HCT116 (cell line): ENCODE measurements at regions of chr10 and their contacts with region 1.

Region 1: DNA sequence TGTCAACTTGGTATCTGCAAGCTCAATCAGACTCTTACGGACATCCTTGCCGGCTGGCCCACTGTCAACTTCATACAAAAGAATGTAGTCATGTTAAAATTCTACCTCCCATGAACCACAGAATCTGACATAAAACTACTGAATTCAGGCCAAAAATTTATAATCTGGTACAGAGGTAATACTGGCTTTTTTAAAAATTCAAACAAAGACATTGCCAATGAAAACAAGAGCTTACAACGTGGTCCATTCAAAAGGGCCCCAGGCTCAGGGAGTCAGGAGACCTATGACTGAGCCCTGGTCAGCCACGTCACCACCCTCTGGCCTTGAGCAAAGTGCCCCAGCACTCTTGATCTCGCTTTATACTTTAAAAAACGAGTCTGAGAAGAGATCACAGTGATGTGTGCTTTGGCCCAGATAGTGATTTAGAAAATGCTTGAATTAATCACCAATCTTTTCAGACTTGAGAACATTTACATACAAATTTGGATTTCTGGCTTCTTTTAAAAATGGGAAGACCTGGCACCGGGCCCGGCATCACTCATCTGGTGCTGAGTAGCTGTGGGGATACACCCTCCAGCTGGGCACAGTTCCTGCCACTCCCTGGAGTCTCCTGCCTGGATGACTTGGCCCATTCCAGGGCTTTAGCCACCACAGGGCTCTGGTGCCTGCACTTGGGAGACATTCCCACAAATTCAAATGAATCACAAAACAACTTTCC is 94.1 kb downstream of the PIP4K2A start:
- DNase-seq: peak; percentile 91
- ATAC-seq: peak; percentile 80
- H3K4me3 ChIP-seq: peak overlapping the region in 1 of 2 experiments; percentile 16; a peak in 2 of 4 replicates
- H3K27ac ChIP-seq: peak overlapping the region; percentile 85
- H3K4me1 ChIP-seq: peaks cover 92 to 100% of the 10 kb centered on the region in 2 experiments
- H3K27me3 ChIP-seq: no peaks in the 10 kb centered on the region
- CTCF ChIP-seq: no peak
- POLR2A ChIP-seq: no peak
- RAD21 ChIP-seq: peak; percentile 13; the same call in 1 of the 2 replicates

Region 2: DNA sequence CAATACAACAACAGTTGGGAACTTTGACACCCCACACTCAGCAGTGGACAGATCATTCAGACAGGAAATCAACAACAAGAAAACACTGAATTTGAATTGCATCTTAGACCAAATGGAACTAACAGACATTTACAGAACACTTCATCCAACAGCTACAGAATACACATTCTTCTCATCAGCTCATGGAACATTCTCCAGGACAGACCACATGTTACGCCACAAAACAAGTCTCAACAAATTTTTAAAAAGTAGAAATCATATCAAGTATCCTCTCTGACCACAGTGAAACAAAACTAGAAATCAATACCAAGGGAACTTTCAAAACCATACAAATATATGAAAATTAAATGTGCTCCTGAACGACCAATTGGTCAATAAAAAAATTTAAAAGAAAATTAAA is 829.0 kb before region 1 on chr10:
- CTCF ChIA-PET with region 1: no interaction called
- POLR2A ChIA-PET with region 1: no interaction called
- RAD21 ChIA-PET with region 1: no interaction called
- intact Hi-C with region 1: no loop called
- DNase-seq: no peak
- ATAC-seq: no peak
- H3K4me3 ChIP-seq: no peak overlapping the region
- H3K27ac ChIP-seq: no peak overlapping the region
- H3K4me1 ChIP-seq: no peaks in the 10 kb centered on the region
- H3K27me3 ChIP-seq: no peaks in the 10 kb centered on the region
- CTCF ChIP-seq: no peak
- POLR2A ChIP-seq: no peak
- RAD21 ChIP-seq: no peak

Region 3: GRCh38 chr10:22823109-22823508 is 202.8 kb after region 1 on chr10:
- CTCF ChIA-PET with region 1: no interaction called
- POLR2A ChIA-PET with region 1: interaction called, 7 read pairs
- RAD21 ChIA-PET with region 1: no interaction called
- intact Hi-C with region 1: loop called (anchors 2 kb)
- DNase-seq: peak; percentile 95
- ATAC-seq: peak; percentile 76
- H3K4me3 ChIP-seq: peak overlapping the region in 1 of 2 experiments; percentile 41; a peak in 3 of 4 replicates
- H3K27ac ChIP-seq: peak overlapping the region; percentile 97
- H3K4me1 ChIP-seq: peaks cover 39 to 59% of the 10 kb centered on the region in 2 experiments
- H3K27me3 ChIP-seq: no peaks in the 10 kb centered on the region
- CTCF ChIP-seq: no peak
- POLR2A ChIP-seq: no peak
- RAD21 ChIP-seq: peak; percentile 33; the same call in 1 of the 2 replicates